Left cardiac atrium (tissue), 4 donors: ENCODE measurements at regions of chr9 and their contacts with region 1.

Region 1: DNA sequence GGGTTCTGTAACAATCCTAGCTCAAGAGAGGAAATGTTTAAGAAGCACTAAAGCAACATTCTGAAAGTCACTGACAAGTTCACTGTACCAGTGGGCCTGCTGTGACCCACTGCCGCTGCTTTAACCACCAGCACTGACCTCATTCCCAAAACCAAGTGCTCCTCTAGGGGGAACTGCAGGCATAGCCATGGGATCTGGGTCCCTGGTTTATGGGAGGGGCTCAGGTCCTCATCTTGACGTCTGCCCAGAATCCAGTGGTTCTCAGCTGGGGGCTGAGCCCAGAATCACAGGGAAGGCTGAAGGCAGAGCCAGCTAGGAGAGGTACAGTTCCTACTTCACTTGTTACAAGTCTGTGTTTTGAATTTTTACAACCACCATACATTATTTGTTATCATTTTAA is 36.1 kb upstream of the SLC2A8 start:
- DNase-seq: no peak
- ATAC-seq: peak in 1 of 2 donors; percentile 54

Region 2: DNA sequence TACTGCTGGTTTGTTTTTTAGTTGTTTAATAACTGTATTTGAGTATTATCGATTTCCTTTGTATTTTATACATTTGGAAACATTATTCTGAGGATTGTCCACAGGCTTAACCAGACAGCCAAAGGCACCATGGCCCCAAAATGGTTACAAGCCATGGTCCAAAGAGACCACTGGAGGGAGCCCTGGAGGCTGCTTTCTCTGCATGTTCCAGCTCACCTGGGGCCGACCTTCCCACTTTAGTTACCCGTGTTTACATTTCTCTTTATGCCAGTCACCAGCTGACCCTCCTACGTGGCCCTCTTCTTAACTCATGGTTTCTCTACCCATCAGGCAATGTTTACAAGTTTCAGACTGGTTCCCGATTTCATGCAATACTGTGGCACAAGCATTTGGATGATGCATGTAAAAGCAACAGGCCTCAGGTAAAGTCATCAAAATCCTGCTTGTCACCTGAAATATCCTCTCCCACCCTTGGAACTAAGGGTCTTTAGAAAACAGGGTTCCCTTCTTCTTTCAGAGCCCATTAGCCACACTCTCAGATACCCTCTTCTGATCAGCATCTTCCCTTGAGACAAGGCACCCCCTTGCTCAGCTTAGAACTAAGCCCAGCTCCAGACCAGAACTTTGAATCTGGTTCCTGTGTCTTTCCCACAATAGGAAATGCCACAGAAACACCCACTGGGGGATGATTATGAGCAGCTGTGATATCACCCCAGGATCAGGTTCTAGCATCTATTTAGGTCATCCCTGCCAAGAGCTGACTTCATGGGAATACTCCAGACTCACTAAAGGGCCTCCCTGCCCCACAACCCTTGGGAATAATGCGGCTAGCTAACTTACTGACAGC is 146.2 kb before region 1 on chr9:
- intact Hi-C with region 1: loop called in 1 of 2 experiments (anchors 5 kb)
- DNase-seq: peak; percentile 58
- ATAC-seq: peak; percentile 58 to 66